OCI-LY7 (cell line): ENCODE measurements at regions of chr19 and their contacts with region 1.

Region 1: DNA sequence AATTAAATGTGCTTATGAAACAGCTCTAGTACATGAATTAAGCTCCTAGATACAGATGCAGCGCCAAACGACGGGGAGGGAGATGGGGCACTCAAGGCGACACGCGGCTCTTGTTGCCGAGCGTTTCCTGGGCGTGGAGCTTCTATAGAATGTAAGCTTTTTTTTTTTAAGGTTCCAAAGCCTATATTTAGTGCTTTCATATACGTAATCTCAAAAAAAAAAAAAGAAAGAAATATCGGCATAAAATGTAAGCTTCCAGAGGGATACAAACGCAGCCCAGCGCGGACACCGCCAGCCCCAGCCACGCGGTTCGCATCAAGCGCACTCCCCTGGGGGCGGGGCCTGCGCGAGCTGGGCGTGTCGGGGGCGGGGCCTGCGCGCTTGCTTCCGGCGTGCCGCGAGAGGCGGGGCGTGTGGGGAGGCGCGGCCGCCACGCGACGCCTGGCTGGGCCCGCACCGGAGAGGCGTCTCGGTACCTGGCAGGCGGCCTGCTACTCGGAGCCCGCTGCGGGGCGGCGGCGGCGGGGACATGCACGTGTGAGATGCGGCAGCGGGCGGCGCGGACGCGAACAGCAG is at the start of gene URI1:
- DNase-seq: peak; percentile 86
- H3K4me3 ChIP-seq: peak within 1 kb of the TSS; percentile 78
- H3K27ac ChIP-seq: peak within 1 kb of the TSS; percentile 47
- H3K4me1 ChIP-seq: peaks cover 37% of the 10 kb centered on the region
- CTCF ChIP-seq: no peak
- total RNA-seq, gene URI1: 45.1 and 68.7 TPM in 2 replicates

Region 2: DNA sequence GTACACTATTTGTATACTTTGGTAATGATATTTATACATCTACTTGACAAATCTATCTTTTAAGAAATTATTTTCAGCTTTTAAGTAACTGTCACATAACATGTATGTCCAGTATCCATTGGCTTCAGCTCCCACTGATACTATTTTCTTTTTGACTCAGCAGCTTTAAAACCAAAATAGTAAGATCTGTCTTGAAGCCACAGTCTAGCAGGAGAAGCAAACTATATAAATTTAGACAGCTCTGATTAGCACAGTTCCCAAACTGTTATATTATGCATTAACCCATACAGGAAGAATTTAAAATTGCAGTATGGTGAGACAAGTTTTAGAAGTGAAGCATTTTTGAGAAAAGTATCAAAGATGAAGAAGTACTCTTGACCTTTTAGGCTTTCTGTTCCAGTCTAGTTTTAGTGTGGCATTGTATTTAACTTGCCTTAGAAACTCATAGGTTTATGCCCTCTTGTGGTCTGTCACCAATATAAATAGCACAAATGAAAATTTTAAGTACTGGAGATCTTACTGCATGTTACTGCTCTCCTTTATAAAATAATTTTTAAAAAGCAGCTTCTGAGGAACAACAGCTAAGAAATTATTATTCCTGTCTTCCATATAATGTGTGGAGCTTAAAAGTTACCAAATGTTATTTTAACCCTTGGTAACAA is 24.8 kb after region 1 on chr19:
- CTCF ChIA-PET with region 1: no interaction called
- POLR2A ChIA-PET with region 1: interaction called, 11 read pairs
- intact Hi-C with region 1: no loop called
- DNase-seq: peak; percentile 34
- H3K4me3 ChIP-seq: no peak overlapping the region
- H3K27ac ChIP-seq: no peak overlapping the region
- H3K4me1 ChIP-seq: peaks cover 14% of the 10 kb centered on the region
- CTCF ChIP-seq: peak; percentile 81

Region 3: DNA sequence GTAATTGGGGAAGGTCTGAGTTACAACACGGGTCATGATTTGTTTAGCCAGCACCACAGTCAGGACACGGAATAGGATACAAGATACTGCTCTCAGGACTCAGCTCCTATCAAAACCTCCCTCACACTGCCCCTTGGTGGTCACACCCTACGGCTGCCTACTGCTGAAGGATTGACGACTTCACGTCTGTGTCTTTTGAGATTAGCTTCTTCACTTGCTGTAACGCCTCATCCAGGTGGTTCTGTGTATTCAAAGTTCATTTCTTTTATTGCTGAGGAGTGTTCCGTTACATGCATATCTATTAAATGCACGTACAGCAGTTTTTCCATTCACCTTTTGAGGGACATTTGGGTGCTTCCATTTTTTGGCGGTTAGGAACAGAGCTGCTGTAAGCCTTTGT is 46.4 kb after region 1 on chr19:
- CTCF ChIA-PET with region 1: no interaction called
- POLR2A ChIA-PET with region 1: no interaction called
- intact Hi-C with region 1: no loop called
- DNase-seq: no peak
- H3K4me3 ChIP-seq: no peak overlapping the region
- H3K27ac ChIP-seq: no peak overlapping the region
- H3K4me1 ChIP-seq: no peaks in the 10 kb centered on the region
- CTCF ChIP-seq: no peak

Region 4: DNA sequence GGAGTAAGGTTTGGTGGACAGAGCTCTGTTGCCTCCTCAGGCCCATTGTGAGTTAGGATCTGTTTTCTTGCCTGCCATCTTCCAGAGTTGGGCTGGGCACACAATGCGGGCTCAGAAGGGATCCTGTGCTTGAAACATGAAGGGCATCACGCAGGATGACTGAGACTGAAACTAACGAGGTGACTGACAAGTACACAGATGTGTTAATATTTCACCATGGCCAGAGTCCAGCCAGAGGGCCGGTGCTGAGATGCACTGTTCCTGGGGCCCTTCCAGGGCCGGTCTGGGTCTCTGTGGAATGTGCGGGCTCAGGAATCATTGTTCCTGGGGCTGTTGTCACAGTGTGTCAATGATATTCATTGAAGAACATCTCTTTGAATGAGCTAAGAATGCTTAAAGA is 163.8 kb after region 1 on chr19:
- CTCF ChIA-PET with region 1: no interaction called
- POLR2A ChIA-PET with region 1: no interaction called
- intact Hi-C with region 1: no loop called
- DNase-seq: no peak
- H3K4me3 ChIP-seq: no peak overlapping the region
- H3K27ac ChIP-seq: no peak overlapping the region
- H3K4me1 ChIP-seq: no peaks in the 10 kb centered on the region
- CTCF ChIP-seq: no peak

Region 5: DNA sequence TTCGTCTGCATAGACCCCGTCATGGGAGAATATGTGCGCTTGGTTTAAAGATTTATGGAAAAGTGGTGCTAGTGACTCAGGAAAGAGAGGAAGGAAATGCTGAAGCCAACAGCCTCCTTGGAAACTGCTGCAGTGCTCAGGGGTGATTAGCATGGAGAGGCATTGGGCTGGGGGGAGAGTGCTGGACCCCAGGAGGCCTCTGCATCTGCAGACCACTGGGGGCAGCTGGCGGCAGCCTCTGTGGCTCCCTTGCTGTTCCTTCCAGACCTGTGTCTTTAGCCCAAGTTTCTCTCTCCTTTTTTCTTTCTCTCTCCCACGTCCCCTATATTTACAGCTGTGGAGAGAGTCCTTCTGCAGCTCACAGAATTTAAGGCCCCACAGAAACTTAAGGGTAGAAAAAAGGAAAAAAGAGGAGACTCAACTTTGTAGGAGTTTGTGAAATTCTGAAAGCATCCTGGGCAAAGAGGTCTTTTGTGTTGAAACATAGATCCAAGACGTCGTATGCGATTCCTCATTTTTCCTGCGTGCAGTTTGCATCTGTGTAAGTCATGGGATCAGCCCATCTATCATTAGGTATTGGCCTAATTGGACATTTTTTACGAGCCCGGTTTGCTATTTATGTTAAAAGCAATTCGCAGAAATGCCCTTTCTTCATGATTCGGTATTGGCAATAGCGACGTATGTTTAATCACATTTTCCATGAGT is 314.0 kb after region 1 on chr19:
- CTCF ChIA-PET with region 1: no interaction called
- POLR2A ChIA-PET with region 1: no interaction called
- intact Hi-C with region 1: no loop called
- DNase-seq: no peak
- H3K4me3 ChIP-seq: no peak overlapping the region
- H3K27ac ChIP-seq: no peak overlapping the region
- H3K4me1 ChIP-seq: no peaks in the 10 kb centered on the region
- CTCF ChIP-seq: no peak